ENCODE measurements at regions of chr19 and their contacts with region 1.

Region 1: GRCh38 chr19:47428177-47428894 is 9.0 kb upstream of the MEIS3 start:
- DNase-seq: peak; percentile 97
- H3K4me3 Mint-ChIP-seq: no peak overlapping the region
- H3K27ac Mint-ChIP-seq: no peak overlapping the region
- H3K4me1 Mint-ChIP-seq: peaks cover under 1% of the 10 kb centered on the region
- H3K27me3 Mint-ChIP-seq: peaks cover 46% of the 10 kb centered on the region
- CTCF ChIP-seq: no peak

Region 2: GRCh38 chr19:47296036-47296435 is 132.3 kb before region 1 on chr19:
- CTCF ChIA-PET with region 1: interaction called, 4 read pairs
- intact Hi-C with region 1: loop called (anchors 2 kb)
- DNase-seq: peak; percentile 91
- H3K4me3 Mint-ChIP-seq: no peak overlapping the region
- H3K27ac Mint-ChIP-seq: no peak overlapping the region
- H3K4me1 Mint-ChIP-seq: peaks cover 2% of the 10 kb centered on the region
- H3K27me3 Mint-ChIP-seq: no peaks in the 10 kb centered on the region
- CTCF ChIP-seq: peak; percentile 86

Region 3: DNA sequence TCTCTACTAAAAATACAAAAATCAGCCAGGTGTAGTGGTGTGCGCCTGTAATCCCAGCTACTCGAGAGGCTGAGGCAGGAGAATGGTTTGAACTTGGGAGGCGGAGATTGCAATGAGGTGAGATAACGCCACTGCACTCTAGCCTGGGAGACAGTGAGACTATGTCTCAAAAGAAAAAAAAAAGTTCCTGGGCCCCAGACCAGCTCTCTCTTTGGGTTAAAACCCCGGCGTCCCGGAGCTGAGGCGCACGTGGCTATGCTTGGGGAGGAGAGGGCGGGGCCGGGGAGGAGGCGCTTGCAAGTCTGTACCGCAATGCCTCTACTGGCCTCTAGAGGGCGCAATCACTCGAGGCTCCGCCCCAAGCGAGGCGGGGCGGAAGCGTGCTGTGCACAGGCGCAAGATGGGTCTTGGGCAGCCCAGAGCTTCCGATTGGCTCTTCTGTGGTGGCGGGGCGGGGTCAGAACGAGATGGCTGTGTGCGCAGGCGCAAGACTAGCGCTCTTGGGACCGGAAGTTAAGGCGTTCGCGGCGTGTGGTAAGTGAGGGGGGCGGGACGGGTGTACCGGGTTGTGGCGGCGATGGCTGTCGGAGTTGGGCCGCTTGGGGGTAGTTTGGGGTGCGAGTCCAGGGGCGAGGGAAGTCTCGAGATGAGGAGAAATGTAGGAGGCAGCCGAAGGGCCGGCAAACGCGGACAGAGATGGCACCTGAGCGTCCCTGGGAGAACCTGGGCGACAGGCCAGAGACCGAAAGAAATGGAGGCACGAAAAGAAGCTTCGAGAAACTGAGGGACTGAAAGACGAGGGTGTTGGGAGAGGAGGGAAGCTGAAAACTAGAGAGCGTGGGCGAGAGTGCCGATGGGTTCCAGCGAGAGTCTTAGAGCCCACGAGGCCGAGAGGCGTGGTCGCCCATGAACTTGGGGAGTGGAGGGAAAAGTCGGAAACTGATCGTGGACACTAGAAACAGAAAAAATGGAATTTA is 79.2 kb before region 1 on chr19 and contains the start of gene DHX34:
- CTCF ChIA-PET with region 1: interaction called, 10 read pairs
- intact Hi-C with region 1: no loop called
- DNase-seq: peak; percentile 99
- H3K4me3 Mint-ChIP-seq: peak within 1 kb of the TSS; percentile 80
- H3K27ac Mint-ChIP-seq: peak within 1 kb of the TSS; percentile 71
- H3K4me1 Mint-ChIP-seq: peaks cover 36% of the 10 kb centered on the region
- H3K27me3 Mint-ChIP-seq: no peaks in the 10 kb centered on the region
- CTCF ChIP-seq: peak; percentile 98
- total RNA-seq, gene DHX34: 51.4 and 51.6 TPM in 2 replicates

Region 4: GRCh38 chr19:47391510-47392223 is 36.7 kb before region 1 on chr19:
- CTCF ChIA-PET with region 1: interaction called, 10 read pairs
- intact Hi-C with region 1: no loop called
- DNase-seq: peak; percentile 91
- H3K4me3 Mint-ChIP-seq: no peak overlapping the region
- H3K27ac Mint-ChIP-seq: no peak overlapping the region
- H3K4me1 Mint-ChIP-seq: no peaks in the 10 kb centered on the region
- H3K27me3 Mint-ChIP-seq: peaks cover 63% of the 10 kb centered on the region
- CTCF ChIP-seq: peak; percentile 95

Region 5: GRCh38 chr19:47414469-47414868 is 13.9 kb before region 1 on chr19:
- CTCF ChIA-PET with region 1: interaction called, 15 read pairs
- intact Hi-C with region 1: no loop called
- DNase-seq: peak; percentile 82
- H3K4me3 Mint-ChIP-seq: no peak overlapping the region
- H3K27ac Mint-ChIP-seq: no peak overlapping the region
- H3K4me1 Mint-ChIP-seq: peaks cover 17% of the 10 kb centered on the region
- H3K27me3 Mint-ChIP-seq: peaks cover 96% of the 10 kb centered on the region
- CTCF ChIP-seq: peak; percentile 40

Region 6: GRCh38 chr19:47713046-47714021 is 285.0 kb after region 1 on chr19 and contains the start of gene EHD2:
- CTCF ChIA-PET with region 1: interaction called, 13 read pairs
- intact Hi-C with region 1: no loop called
- DNase-seq: peak; percentile 86
- H3K4me3 Mint-ChIP-seq: peak within 1 kb of the TSS; percentile 80
- H3K27ac Mint-ChIP-seq: peak within 1 kb of the TSS; percentile 82
- H3K4me1 Mint-ChIP-seq: peaks cover 23% of the 10 kb centered on the region
- H3K27me3 Mint-ChIP-seq: no peaks in the 10 kb centered on the region
- CTCF ChIP-seq: peak; percentile 99
- total RNA-seq, gene EHD2: 52.3 and 71.5 TPM in 2 replicates